A673 (cell line): ENCODE measurements at regions of chr19 and their contacts with region 1.

Region 1: GRCh38 chr19:47428177-47428894 is 9.0 kb upstream of the MEIS3 start:
- DNase-seq: peak; percentile 100
- H3K4me3 ChIP-seq: peak overlapping the region; percentile 36
- H3K27ac ChIP-seq: peak overlapping the region; percentile 82
- H3K4me1 ChIP-seq: peaks cover 17% of the 10 kb centered on the region
- H3K27me3 ChIP-seq: peaks cover 4% of the 10 kb centered on the region
- CTCF ChIP-seq: no peak

Region 2: DNA sequence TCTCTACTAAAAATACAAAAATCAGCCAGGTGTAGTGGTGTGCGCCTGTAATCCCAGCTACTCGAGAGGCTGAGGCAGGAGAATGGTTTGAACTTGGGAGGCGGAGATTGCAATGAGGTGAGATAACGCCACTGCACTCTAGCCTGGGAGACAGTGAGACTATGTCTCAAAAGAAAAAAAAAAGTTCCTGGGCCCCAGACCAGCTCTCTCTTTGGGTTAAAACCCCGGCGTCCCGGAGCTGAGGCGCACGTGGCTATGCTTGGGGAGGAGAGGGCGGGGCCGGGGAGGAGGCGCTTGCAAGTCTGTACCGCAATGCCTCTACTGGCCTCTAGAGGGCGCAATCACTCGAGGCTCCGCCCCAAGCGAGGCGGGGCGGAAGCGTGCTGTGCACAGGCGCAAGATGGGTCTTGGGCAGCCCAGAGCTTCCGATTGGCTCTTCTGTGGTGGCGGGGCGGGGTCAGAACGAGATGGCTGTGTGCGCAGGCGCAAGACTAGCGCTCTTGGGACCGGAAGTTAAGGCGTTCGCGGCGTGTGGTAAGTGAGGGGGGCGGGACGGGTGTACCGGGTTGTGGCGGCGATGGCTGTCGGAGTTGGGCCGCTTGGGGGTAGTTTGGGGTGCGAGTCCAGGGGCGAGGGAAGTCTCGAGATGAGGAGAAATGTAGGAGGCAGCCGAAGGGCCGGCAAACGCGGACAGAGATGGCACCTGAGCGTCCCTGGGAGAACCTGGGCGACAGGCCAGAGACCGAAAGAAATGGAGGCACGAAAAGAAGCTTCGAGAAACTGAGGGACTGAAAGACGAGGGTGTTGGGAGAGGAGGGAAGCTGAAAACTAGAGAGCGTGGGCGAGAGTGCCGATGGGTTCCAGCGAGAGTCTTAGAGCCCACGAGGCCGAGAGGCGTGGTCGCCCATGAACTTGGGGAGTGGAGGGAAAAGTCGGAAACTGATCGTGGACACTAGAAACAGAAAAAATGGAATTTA is 79.2 kb before region 1 on chr19 and contains the start of gene DHX34:
- CTCF ChIA-PET with region 1: interaction called, 13 read pairs
- POLR2A ChIA-PET with region 1: no interaction called
- intact Hi-C with region 1: no loop called
- DNase-seq: peak; percentile 99
- H3K4me3 ChIP-seq: peak within 1 kb of the TSS; percentile 67
- H3K27ac ChIP-seq: peak within 1 kb of the TSS; percentile 76
- H3K4me1 ChIP-seq: peaks cover 8% of the 10 kb centered on the region
- H3K27me3 ChIP-seq: no peaks in the 10 kb centered on the region
- CTCF ChIP-seq: peak; percentile 99
- total RNA-seq, gene DHX34: 24.5 and 29.6 TPM in 2 replicates

Region 3: GRCh38 chr19:47483800-47484690 is 55.7 kb after region 1 on chr19 and contains the start of gene KPTN:
- CTCF ChIA-PET with region 1: interaction called, 12 read pairs
- POLR2A ChIA-PET with region 1: no interaction called
- intact Hi-C with region 1: loop called (anchors 5 kb)
- DNase-seq: peak; percentile 95
- H3K4me3 ChIP-seq: peak within 1 kb of the TSS; percentile 74
- H3K27ac ChIP-seq: peak within 1 kb of the TSS; percentile 98
- H3K4me1 ChIP-seq: peaks cover 6% of the 10 kb centered on the region
- H3K27me3 ChIP-seq: no peaks in the 10 kb centered on the region
- CTCF ChIP-seq: peak; percentile 98
- total RNA-seq, gene KPTN: 18.7 and 18.9 TPM in 2 replicates

Region 4: GRCh38 chr19:47497050-47497766 is 68.9 kb after region 1 on chr19:
- CTCF ChIA-PET with region 1: interaction called, 12 read pairs
- POLR2A ChIA-PET with region 1: no interaction called
- intact Hi-C with region 1: no loop called
- DNase-seq: no peak
- H3K4me3 ChIP-seq: no peak overlapping the region
- H3K27ac ChIP-seq: no peak overlapping the region
- H3K4me1 ChIP-seq: no peaks in the 10 kb centered on the region
- H3K27me3 ChIP-seq: no peaks in the 10 kb centered on the region
- CTCF ChIP-seq: no peak